ENCODE measurements at regions of chr17 and their contacts with region 1.

Region 1: GRCh38 chr17:5584383-5585286 is at the start of gene NLRP1:
- DNase-seq: peak; percentile 87
- CTCF ChIP-seq: no peak

Region 2: DNA sequence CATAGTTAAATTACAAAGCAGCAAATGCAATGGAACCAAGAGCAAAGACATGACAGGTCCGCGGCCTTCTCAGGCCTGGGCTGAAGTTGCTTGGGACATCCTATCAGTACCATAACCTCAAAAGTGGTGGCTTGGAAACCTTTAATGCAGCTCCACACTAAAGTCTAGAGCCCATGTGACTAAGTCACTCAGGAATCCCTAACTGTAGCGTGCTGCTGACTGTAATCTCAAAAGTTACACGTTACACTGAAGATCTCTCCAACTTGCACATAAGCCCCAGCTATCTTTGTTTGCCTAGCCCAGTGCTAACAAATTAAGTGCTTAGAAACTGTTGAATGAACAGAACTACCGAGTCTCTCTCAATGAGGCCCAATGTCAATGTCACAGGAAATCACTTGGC is 193.0 kb before region 1 on chr17:
- in situ Hi-C with region 1: no loop called
- DNase-seq: no peak
- CTCF ChIP-seq: no peak

Region 3: DNA sequence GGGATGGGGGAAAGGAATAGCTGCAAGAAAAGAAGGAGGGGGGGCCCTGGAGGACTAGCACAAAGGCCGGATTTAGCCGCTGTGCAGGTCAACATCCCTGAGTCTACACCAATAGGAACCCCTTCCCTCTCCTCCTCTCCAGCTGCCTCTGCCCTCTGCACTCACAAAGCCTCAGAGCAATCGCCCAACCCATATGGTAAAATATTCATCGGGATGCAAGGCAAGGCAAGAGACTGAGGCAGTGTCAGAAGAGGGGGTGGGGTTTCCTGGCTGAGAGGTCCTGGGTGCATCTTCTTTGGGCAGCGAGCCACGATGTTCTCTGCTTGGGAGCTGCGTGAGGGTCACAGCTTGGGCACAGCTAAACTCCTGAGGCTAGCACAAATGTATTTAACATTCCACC is 115.2 kb after region 1 on chr17:
- in situ Hi-C with region 1: loop called (anchors 5 kb)
- DNase-seq: no peak
- CTCF ChIP-seq: no peak

Region 4: GRCh38 chr17:6435968-6436367 is 851.3 kb after region 1 on chr17:
- in situ Hi-C with region 1: loop called (anchors 10 kb)
- DNase-seq: peak; percentile 83
- CTCF ChIP-seq: peak; percentile 88